ENCODE measurements at regions of chr5 and their contacts with region 1.

Region 1: GRCh38 chr5:132007399-132008165 is 3.9 kb downstream of the ACSL6 start:
- DNase-seq: peak; percentile 64
- H3K4me3 Mint-ChIP-seq: no peak overlapping the region
- H3K27ac Mint-ChIP-seq: no peak overlapping the region
- H3K4me1 Mint-ChIP-seq: peaks cover 34% of the 10 kb centered on the region
- H3K27me3 Mint-ChIP-seq: peaks cover 31% of the 10 kb centered on the region

Region 2: DNA sequence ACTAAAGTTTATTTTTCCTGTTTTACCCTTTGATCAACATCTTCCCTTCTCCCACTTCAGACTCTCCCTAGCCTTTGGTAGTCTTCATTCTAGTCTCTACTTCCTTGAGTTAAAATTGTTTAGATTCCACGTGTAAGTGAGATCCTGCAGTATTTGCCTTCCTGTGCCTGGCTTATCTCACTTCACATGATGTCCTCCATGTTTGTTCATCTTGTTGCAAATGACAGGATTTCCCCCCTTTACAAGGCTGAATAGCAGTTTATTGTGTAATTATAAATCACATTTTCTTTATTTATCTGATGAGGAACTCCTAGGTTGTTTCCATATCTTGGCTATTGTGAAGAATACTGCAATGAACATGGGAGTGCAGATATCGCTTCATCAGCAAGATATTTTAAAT is 1641.6 kb before region 1 on chr5:
- intact Hi-C with region 1: no loop called
- DNase-seq: no peak
- H3K4me3 Mint-ChIP-seq: no peak overlapping the region
- H3K27ac Mint-ChIP-seq: no peak overlapping the region
- H3K4me1 Mint-ChIP-seq: no peaks in the 10 kb centered on the region
- H3K27me3 Mint-ChIP-seq: no peaks in the 10 kb centered on the region

Region 3: DNA sequence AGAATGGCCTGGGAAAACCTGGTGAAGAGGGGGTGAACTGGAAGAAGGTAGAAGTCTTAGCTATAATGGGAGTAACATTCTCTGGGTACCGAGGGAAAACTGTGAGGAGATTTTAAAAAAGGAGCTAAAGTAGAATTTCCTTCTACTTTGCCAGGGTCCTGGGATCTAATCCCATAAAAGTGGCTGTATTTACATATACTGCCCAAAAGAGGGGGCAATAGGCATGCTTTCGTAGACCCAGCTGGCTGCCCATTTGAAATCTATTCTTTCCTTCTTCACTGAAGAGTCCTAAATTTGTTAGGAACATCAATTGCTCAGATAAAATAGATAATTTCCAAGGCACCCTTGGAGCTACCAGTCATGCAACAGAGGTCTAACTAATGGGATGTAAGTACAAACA is 584.5 kb before region 1 on chr5:
- intact Hi-C with region 1: loop called (anchors 2 kb)
- DNase-seq: no peak
- H3K4me3 Mint-ChIP-seq: no peak overlapping the region
- H3K27ac Mint-ChIP-seq: no peak overlapping the region
- H3K4me1 Mint-ChIP-seq: peaks cover 2% of the 10 kb centered on the region
- H3K27me3 Mint-ChIP-seq: no peaks in the 10 kb centered on the region

Region 4: GRCh38 chr5:131589510-131590348 is 417.9 kb before region 1 on chr5:
- intact Hi-C with region 1: loop called (anchors 1 kb)
- DNase-seq: no peak
- H3K4me3 Mint-ChIP-seq: no peak overlapping the region
- H3K27ac Mint-ChIP-seq: no peak overlapping the region
- H3K4me1 Mint-ChIP-seq: peaks cover 35% of the 10 kb centered on the region
- H3K27me3 Mint-ChIP-seq: no peaks in the 10 kb centered on the region

Region 5: DNA sequence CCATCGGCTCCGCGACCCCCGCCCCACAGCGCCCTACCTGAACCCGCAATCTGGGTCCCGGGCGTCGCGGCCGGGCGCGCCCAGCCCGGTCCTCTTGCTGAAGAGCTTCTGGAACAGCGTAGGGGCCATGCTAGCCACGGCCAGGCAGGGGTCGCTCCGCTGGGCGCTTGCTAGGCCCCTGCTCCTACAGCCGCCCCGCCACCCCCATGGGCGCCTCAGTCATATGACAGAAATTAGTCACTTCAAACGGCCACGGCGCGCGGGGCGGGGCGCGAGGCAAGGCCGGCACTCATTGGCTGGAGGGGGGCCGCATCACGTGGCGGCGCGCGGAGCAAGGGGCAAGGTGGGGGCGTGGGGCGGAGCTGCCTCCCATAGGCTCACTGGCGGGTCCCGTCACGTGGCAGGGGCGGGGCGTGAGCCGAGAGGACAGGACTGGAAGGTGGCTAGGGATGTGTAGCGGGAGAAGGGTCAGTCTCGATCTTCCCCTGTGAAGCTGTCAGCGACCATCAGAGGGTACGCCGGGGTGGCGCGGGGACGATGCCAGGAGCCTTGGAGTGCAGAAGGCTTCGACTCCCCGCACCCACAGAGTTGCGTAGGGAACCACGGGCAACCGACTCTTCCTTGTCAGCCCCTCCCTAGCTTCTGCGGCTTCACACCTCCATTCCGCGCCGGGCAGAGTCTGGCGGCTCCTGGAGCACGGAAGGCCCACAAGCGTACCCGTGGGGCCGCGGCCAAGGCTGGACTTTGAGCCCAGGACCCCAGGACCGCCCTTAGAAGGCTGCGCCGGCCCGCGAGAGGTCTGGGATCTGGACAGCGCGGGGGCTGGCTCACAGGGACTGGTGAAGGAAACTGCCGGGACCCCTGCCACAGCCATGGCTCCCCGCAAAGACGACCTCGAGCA is 210.5 kb before region 1 on chr5 and contains the start of gene FNIP1:
- intact Hi-C with region 1: loop called (anchors 1 kb)
- DNase-seq: peak; percentile 99
- H3K4me3 Mint-ChIP-seq: peak within 1 kb of the TSS; percentile 97
- H3K27ac Mint-ChIP-seq: peak within 1 kb of the TSS; percentile 91
- H3K4me1 Mint-ChIP-seq: peaks cover 28% of the 10 kb centered on the region
- H3K27me3 Mint-ChIP-seq: peaks cover 8% of the 10 kb centered on the region
- total RNA-seq, gene FNIP1: 18.1 and 18.8 TPM in 2 replicates

Region 6: GRCh38 chr5:131810510-131811249 is 196.9 kb before region 1 on chr5:
- intact Hi-C with region 1: loop called (anchors 1 kb)
- DNase-seq: no peak
- H3K4me3 Mint-ChIP-seq: no peak overlapping the region
- H3K27ac Mint-ChIP-seq: no peak overlapping the region
- H3K4me1 Mint-ChIP-seq: no peaks in the 10 kb centered on the region
- H3K27me3 Mint-ChIP-seq: peaks cover 11% of the 10 kb centered on the region

Region 7: GRCh38 chr5:132019857-132020555 is 12.4 kb after region 1 on chr5:
- intact Hi-C with region 1: loop called (anchors 1 kb)
- DNase-seq: peak; percentile 82
- H3K4me3 Mint-ChIP-seq: peak overlapping the region; percentile 34
- H3K27ac Mint-ChIP-seq: peak overlapping the region; percentile 92
- H3K4me1 Mint-ChIP-seq: peaks cover 48% of the 10 kb centered on the region
- H3K27me3 Mint-ChIP-seq: peaks cover 24% of the 10 kb centered on the region

Measured in activated T-helper 2 cell treated with anti-CD3 and anti-CD28 coated beads, Interferon-gamma antibody, Interleukin-2, Interleukin-4, amounts not matched to agents 10 μg/mL and 5 μg/mL and 100 μg/mL, durations not matched to agents 14 hours and 24 hours and 36 hours (primary cell).